Activated CD4-positive, alpha-beta T cell treated with anti-CD3 and anti-CD28 coated beads, Interleukin-2, amount 10 ng/mL, durations not matched to agents 7 days and 5 days (primary cell): ENCODE measurements at regions of chr7 and their contacts with region 1.

Region 1: GRCh38 chr7:4797858-4798705 is 22.7 kb downstream of the AP5Z1 start:
- DNase-seq: peak; percentile 55
- H3K4me3 Mint-ChIP-seq: no peak overlapping the region
- H3K27ac Mint-ChIP-seq: no peak overlapping the region
- H3K4me1 Mint-ChIP-seq: peaks cover 8% of the 10 kb centered on the region
- H3K27me3 Mint-ChIP-seq: no peaks in the 10 kb centered on the region

Region 2: GRCh38 chr7:4738711-4739527 is 59.2 kb before region 1 on chr7:
- CTCF ChIA-PET with region 1: no interaction called
- POLR2A ChIA-PET with region 1: no interaction called
- DNase-seq: peak; percentile 25
- H3K4me3 Mint-ChIP-seq: peak overlapping the region; percentile 57
- H3K27ac Mint-ChIP-seq: peak overlapping the region; percentile 77
- H3K4me1 Mint-ChIP-seq: peaks cover 75% of the 10 kb centered on the region
- H3K27me3 Mint-ChIP-seq: no peaks in the 10 kb centered on the region

Region 3: DNA sequence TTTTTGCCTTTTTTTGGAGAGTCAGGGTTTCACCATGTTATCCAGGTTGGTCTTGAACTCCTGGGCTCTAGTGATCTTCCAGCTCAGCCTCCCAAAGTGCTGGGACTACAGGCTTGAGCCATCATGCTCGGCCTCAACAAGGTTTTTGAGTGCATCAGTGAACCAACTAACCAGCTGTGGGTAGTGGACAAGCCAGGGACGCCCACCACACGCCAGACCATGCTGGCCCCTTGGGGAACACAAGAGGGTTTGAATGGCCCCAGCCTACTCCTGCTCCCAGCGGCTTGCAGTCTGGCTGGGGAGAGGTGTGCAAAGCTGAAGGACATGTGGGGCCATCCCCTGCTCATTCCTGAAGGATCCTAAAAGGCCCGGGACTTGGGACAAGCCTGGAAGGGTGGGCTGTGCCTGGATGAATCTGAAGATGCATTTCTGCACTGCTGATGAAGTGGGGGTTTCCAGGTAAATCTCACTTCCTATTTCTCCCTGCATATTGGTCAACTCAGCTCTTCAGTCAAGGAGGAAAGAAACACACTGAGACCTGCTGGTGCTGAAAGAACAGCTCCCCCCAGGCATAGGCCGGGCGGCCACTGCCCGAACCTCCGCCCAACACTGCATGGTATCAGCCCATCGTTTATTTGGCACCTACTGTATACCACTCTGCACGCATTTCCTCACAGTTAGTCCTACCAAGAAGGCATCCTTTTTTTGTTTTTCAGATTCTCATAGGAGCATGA is 154.0 kb after region 1 on chr7:
- CTCF ChIA-PET with region 1: no interaction called
- POLR2A ChIA-PET with region 1: no interaction called
- DNase-seq: peak; percentile 27
- H3K4me3 Mint-ChIP-seq: no peak overlapping the region
- H3K27ac Mint-ChIP-seq: no peak overlapping the region
- H3K4me1 Mint-ChIP-seq: peaks cover 1% of the 10 kb centered on the region
- H3K27me3 Mint-ChIP-seq: peaks cover 8% of the 10 kb centered on the region

Region 4: DNA sequence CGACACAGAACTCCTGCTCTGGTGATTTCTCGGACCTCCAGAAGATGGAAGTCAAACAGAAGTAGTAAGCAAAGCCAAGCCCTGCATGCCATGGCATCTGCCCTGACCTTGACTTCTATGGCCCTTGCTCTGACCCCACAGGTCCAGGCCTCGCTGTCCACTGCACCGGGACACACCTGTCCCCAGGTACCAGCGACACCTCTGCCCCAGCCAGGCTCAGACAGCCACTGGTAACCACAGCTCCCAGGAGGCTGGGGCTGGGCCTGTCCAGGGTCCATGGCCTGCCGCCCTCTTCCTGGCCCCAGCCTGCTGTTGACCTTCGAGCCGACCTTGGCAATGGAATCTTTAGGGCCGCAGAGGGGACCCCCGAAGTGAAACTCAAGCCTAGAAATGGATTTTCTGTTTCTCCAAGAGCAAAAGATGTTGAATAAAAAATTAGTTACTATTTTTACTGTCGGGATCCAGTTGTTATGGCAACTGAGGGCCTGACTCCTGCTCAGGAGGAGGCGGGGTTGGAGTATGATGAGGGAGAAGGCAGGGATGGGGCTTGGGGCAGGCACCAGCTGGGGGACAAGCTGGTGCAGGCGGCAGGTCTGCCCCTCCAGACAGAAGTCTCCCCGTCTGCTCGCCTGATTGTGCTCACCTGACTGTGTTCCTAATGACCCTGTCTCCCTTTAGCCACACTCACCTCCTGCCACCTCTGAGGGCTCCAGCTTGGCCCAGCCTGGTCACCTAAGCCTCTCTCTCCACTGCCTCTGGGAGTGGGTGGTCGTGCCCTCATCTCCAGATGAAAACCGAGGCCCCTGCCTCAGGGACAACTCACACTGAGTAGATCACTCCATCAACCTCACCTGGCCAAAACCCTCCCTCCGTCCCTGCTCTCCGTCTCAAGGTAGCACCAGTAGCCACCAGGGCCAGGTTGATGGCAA is 165.1 kb after region 1 on chr7:
- CTCF ChIA-PET with region 1: no interaction called
- POLR2A ChIA-PET with region 1: no interaction called
- DNase-seq: no peak
- H3K4me3 Mint-ChIP-seq: no peak overlapping the region
- H3K27ac Mint-ChIP-seq: no peak overlapping the region
- H3K4me1 Mint-ChIP-seq: peaks cover 5% of the 10 kb centered on the region
- H3K27me3 Mint-ChIP-seq: peaks cover 6% of the 10 kb centered on the region

Region 5: DNA sequence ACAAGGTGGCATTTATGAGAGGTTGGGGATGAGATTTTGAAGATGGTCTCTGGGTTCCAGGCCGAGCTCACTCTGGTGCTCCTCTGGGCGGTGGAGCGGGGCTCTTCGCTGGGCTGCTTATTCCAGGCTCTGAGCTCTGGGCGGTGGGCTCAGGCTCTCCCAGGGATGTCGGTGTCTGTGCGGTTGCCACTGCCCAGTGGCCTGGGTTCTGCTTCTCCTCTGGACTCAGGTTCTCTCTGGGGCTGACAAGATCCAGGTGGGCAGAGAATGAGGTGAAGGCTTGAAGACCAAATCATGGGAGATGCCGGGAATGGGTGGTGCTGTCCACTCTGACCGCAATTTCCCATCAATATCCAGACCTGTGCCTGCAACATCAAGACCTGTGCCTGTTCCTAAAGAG is 288.2 kb after region 1 on chr7:
- CTCF ChIA-PET with region 1: interaction called, 12 read pairs
- POLR2A ChIA-PET with region 1: interaction called, 7 read pairs
- DNase-seq: no peak
- H3K4me3 Mint-ChIP-seq: no peak overlapping the region
- H3K27ac Mint-ChIP-seq: no peak overlapping the region
- H3K4me1 Mint-ChIP-seq: peaks cover 10% of the 10 kb centered on the region
- H3K27me3 Mint-ChIP-seq: peaks cover 2% of the 10 kb centered on the region